ENCODE measurements at regions of chr4 and their contacts with region 1.

Region 1: GRCh38 chr4:165493359-165493758 is 114.6 kb downstream of the CPE start:
- DNase-seq: peak; percentile 13 to 69 (median 45)
- ATAC-seq: peak; percentile 83 to 92 (median 84)
- H3K4me3 ChIP-seq: no peak overlapping the region
- H3K4me3 Mint-ChIP-seq: peak overlapping the region; percentile 49 to 64 (median 51)
- H3K27ac ChIP-seq: no peak overlapping the region
- H3K27ac Mint-ChIP-seq: no peak overlapping the region
- H3K4me1 ChIP-seq: peaks cover 0 to 6% of the 10 kb centered on the region in 2 experiments
- H3K4me1 Mint-ChIP-seq: peaks cover 5 to 12% (median 6%) of the 10 kb centered on the region in 3 donors
- H3K27me3 ChIP-seq: peaks cover 2 to 12% of the 10 kb centered on the region in 2 experiments
- H3K27me3 Mint-ChIP-seq: peaks cover 23 to 25% of the 10 kb centered on the region in 2 donors

Region 2: DNA sequence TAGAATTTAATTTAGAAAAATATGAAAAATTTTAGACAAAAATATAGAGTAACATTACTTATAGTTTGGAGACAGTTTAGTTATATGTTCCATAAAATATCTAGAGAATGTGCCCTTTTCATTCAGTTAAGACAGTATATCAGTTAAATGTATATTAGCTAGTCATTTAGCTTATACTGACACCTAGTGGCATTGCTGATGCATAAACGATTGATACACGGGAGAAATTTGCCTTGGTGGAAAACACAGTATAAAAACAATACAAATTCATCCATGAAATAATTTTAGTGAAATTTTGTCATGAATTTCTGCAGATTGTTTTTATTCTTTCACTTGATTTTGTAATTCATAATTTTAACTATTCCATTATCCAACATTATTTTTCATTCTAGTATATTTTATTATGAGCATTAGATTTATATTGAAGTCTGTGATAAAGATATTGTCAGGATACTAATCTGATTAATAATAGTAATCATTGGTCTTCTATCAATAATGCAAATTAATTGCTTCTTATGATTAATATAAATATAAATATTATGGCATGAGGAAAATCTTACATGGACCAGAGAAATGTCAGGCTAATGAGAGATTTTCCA is 598.7 kb after region 1 on chr4:
- CTCF ChIA-PET with region 1: interaction called, 4 to 10 read pairs
- POLR2A ChIA-PET with region 1: no interaction called
- DNase-seq: peak in 1 of 35 experiments; percentile 35
- ATAC-seq: no peak
- H3K4me3 ChIP-seq: no peak overlapping the region
- H3K4me3 Mint-ChIP-seq: no peak overlapping the region
- H3K27ac ChIP-seq: no peak overlapping the region
- H3K27ac Mint-ChIP-seq: no peak overlapping the region
- H3K4me1 ChIP-seq: no peaks in the 10 kb centered on the region
- H3K4me1 Mint-ChIP-seq: no peaks in the 10 kb centered on the region
- H3K27me3 ChIP-seq: no peaks in the 10 kb centered on the region
- H3K27me3 Mint-ChIP-seq: peaks cover 0 to 2% of the 10 kb centered on the region in 2 donors